Sigmoid colon (tissue), 7 donors: ENCODE measurements at regions of chr3 and their contacts with region 1.

Region 1: GRCh38 chr3:66500576-66501482 is at the start of gene LRIG1:
- DNase-seq: peak; percentile 100
- H3K4me3 ChIP-seq: peak within 1 kb of the TSS; percentile 82 to 99 (median 87)
- H3K27ac ChIP-seq: peak within 1 kb of the TSS; percentile 90 to 97 (median 94)
- H3K4me1 ChIP-seq: peaks cover 0 to 46% (median 40%) of the 10 kb centered on the region in 4 donors
- H3K27me3 ChIP-seq: no peaks in the 10 kb centered on the region
- CTCF ChIP-seq: peak; percentile 16 to 49 (median 32)
- EP300 ChIP-seq: peak in 1 of 4 donors; percentile 36
- POLR2A ChIP-seq: no peak
- total RNA-seq, gene LRIG1: 150 to 226 (median 210) TPM

Region 2: GRCh38 chr3:66038726-66039589 is 461.9 kb before region 1 on chr3 and contains the start of gene MAGI1:
- intact Hi-C with region 1: loop called (anchors 5 kb)
- DNase-seq: peak; percentile 96
- H3K4me3 ChIP-seq: peak within 1 kb of the TSS; percentile 62 to 83 (median 74)
- H3K27ac ChIP-seq: peak within 1 kb of the TSS; percentile 87 to 96 (median 92)
- H3K4me1 ChIP-seq: peaks cover 0 to 33% (median 24%) of the 10 kb centered on the region in 4 donors
- H3K27me3 ChIP-seq: no peaks in the 10 kb centered on the region
- CTCF ChIP-seq: no peak
- EP300 ChIP-seq: no peak
- POLR2A ChIP-seq: peak in 1 of 2 donors; percentile 26
- total RNA-seq, gene MAGI1: 29.8 to 54.0 (median 44.8) TPM

Region 3: GRCh38 chr3:66407611-66408218 is 93.1 kb before region 1 on chr3:
- intact Hi-C with region 1: loop called (anchors 2 kb)
- DNase-seq: peak; percentile 86
- H3K4me3 ChIP-seq: no peak overlapping the region
- H3K27ac ChIP-seq: peak overlapping the region; percentile 73 to 95 (median 86)
- H3K4me1 ChIP-seq: peaks cover 0 to 100% (median 99%) of the 10 kb centered on the region in 4 donors
- H3K27me3 ChIP-seq: no peaks in the 10 kb centered on the region
- CTCF ChIP-seq: peak; percentile 68 to 90 (median 86)
- EP300 ChIP-seq: no peak
- POLR2A ChIP-seq: no peak

Region 4: DNA sequence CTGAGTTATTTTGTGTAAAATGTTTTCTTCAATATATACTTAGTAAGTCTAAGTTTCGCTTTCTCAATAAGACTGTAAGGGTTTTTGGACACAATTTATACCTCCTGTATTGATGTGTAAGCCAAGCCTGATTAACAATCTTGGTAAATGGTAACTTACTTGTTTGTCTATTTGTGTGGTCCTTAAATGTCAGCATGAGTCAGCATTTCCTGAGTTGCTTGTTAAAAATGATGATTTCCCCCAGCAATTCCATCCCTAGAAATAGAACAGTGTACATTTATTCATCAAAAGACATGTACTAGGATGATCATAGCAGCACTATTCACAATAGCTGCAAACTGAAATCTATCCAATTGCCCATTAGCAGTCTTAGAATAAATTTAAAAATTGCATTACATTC is 53.3 kb after region 1 on chr3:
- intact Hi-C with region 1: loop called (anchors 2 kb)
- DNase-seq: no peak
- H3K4me3 ChIP-seq: no peak overlapping the region
- H3K27ac ChIP-seq: peak overlapping the region in 2 of 4 donors; percentile 79 to 82
- H3K4me1 ChIP-seq: peaks cover 2 to 42% (median 34%) of the 10 kb centered on the region in 4 donors
- H3K27me3 ChIP-seq: no peaks in the 10 kb centered on the region
- CTCF ChIP-seq: no peak
- EP300 ChIP-seq: no peak
- POLR2A ChIP-seq: no peak

Region 5: GRCh38 chr3:66693461-66694031 is 192.7 kb after region 1 on chr3:
- intact Hi-C with region 1: loop called (anchors 5 kb)
- DNase-seq: peak; percentile 74
- H3K4me3 ChIP-seq: no peak overlapping the region
- H3K27ac ChIP-seq: peak overlapping the region; percentile 56 to 83 (median 78)
- H3K4me1 ChIP-seq: peaks cover 0 to 48% (median 40%) of the 10 kb centered on the region in 4 donors
- H3K27me3 ChIP-seq: no peaks in the 10 kb centered on the region
- CTCF ChIP-seq: no peak
- EP300 ChIP-seq: no peak
- POLR2A ChIP-seq: no peak

Region 6: DNA sequence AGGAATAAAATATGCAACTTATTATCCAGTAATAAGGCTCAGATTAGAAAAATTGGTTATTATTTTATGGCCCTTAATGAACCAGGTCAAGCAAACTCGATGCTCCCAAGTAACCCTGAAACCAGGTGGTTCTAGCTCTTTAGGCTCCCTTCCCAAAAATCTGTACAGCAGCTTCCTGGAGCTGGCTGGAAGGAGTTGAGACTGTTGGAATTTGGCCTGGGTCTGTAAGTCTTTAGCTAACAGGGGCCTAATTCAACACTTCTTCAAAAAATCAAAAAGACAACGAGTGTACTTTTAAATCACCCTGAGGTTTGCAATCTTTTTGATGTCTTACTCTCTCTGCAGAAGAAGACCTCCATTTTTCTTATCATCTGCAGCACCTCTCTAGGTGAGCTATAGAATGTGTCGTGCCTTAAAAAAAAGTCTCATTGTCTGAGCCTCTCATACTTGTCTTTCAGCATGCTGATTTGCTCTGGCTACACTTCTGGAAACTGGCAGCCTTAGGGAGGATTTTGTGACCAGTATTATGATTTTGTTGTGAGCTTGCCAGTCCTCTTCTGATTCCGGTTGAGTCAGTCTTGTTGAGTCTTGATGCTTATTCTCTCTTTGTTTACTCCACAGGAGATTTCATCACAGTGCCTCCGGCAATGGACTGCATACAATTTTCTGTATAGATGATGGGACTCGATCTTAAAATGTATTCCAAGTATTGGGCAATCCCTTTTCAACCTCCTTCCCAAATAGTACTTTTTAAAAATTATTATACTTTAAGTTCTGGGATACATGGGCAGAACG is 262.3 kb after region 1 on chr3:
- intact Hi-C with region 1: no loop called
- DNase-seq: no peak
- H3K4me3 ChIP-seq: no peak overlapping the region
- H3K27ac ChIP-seq: peak overlapping the region in 1 of 4 donors; percentile 34
- H3K4me1 ChIP-seq: no peaks in the 10 kb centered on the region
- H3K27me3 ChIP-seq: no peaks in the 10 kb centered on the region
- CTCF ChIP-seq: no peak
- EP300 ChIP-seq: no peak
- POLR2A ChIP-seq: no peak

Region 7: GRCh38 chr3:67906261-67906660 is 1405.4 kb after region 1 on chr3:
- intact Hi-C with region 1: no loop called
- DNase-seq: no peak
- H3K4me3 ChIP-seq: no peak overlapping the region
- H3K27ac ChIP-seq: no peak overlapping the region
- H3K4me1 ChIP-seq: no peaks in the 10 kb centered on the region
- H3K27me3 ChIP-seq: no peaks in the 10 kb centered on the region
- CTCF ChIP-seq: no peak
- EP300 ChIP-seq: no peak
- POLR2A ChIP-seq: no peak